ENCODE measurements at regions of chr17 and their contacts with region 1.

Region 1: DNA sequence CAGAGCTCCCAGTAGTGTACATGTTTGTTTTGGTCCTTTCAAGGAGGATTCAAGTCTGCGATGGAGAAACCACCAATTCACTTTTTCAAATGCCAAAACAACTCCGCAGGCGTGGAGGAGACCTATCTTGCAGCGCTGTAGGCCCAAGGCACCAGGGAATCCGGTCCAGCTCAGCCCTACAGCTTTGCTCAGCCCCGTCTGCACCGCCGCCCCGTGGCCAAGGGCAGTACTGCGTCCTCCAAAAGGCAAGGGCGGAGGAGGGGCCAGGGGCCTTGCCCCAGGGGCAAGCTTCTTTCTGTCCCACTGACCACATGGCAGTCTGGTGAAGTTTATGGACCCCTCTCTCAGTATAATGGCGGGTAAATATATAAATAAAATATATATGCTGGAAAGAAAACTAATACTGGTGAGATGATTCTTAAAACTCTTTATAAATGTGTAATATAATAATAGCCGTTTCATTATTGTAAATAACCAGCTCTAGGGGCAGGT is 709 bp upstream of the CD300LG start:
- DNase-seq: peak; percentile 70
- ATAC-seq: peak; percentile 93
- H3K4me3 ChIP-seq: no peak overlapping the region
- H3K27ac ChIP-seq: no peak overlapping the region
- H3K4me1 ChIP-seq: peaks cover 18 to 25% of the 10 kb centered on the region in 2 experiments
- H3K27me3 ChIP-seq: no peaks in the 10 kb centered on the region
- CTCF ChIP-seq: peak; percentile 90 to 100 (median 96)
- POLR2A ChIP-seq: no peak
- RAD21 ChIP-seq: peak; percentile 91

Region 2: GRCh38 chr17:43694077-43694870 is 152.0 kb before region 1 on chr17:
- CTCF ChIA-PET with region 1: interaction called, 6 read pairs
- POLR2A ChIA-PET with region 1: no interaction called
- RAD21 ChIA-PET with region 1: interaction called in 1 of 2 experiments, 5 read pairs
- intact Hi-C with region 1: loop called (anchors 10 kb)
- DNase-seq: peak; percentile 78
- ATAC-seq: peak; percentile 94
- H3K4me3 ChIP-seq: no peak overlapping the region
- H3K27ac ChIP-seq: no peak overlapping the region
- H3K4me1 ChIP-seq: peaks cover 3 to 9% of the 10 kb centered on the region in 2 experiments; a peak in 3 of 4 replicates
- H3K27me3 ChIP-seq: no peaks in the 10 kb centered on the region
- CTCF ChIP-seq: peak; percentile 81 to 99 (median 92)
- POLR2A ChIP-seq: no peak
- RAD21 ChIP-seq: peak; percentile 98

Region 3: GRCh38 chr17:43766413-43767052 is 79.7 kb before region 1 on chr17:
- CTCF ChIA-PET with region 1: interaction called, 13 read pairs
- POLR2A ChIA-PET with region 1: no interaction called
- RAD21 ChIA-PET with region 1: interaction called in 1 of 2 experiments, 3 read pairs
- intact Hi-C with region 1: no loop called
- DNase-seq: peak; percentile 39
- ATAC-seq: peak; percentile 79
- H3K4me3 ChIP-seq: no peak overlapping the region
- H3K27ac ChIP-seq: no peak overlapping the region
- H3K4me1 ChIP-seq: no peaks in the 10 kb centered on the region
- H3K27me3 ChIP-seq: no peaks in the 10 kb centered on the region
- CTCF ChIP-seq: peak; percentile 56 to 97 (median 90); a peak in 5 of 6 replicates
- POLR2A ChIP-seq: no peak
- RAD21 ChIP-seq: peak; percentile 50; the same call in 1 of the 2 replicates

Region 4: DNA sequence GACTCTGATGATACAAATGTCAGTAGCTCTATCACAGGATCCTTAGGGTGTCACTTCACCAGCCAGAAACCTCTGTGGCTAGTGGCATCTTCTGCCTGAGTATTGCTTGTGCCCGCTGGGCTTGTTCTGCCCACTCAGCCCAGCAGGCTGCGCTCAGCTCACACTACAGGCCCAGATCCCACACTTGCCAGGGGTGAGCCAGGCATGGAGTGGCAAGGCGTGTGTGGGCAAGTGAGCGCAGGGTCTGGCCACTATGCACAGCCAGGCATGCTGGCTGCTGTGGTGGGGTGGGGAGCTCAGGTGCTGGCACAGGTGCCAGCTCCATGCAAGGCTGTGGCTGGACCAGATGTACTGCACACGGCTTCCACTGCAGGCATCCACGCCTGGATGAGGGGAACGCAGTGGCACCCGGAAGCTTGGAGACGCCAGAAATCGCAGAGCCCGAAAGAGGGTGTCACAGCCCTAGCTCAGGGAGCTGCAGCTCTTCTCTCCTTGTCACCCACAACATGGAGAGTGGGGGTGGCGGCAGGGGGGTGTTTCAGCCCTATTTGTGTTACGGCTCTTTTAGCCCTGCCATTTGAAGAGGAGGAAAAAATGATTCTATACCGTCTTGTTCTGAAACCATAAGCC is 55.8 kb before region 1 on chr17:
- CTCF ChIA-PET with region 1: interaction called, 13 read pairs
- POLR2A ChIA-PET with region 1: no interaction called
- RAD21 ChIA-PET with region 1: no interaction called
- intact Hi-C with region 1: loop called (anchors 1 kb)
- DNase-seq: no peak
- ATAC-seq: peak; percentile 64; the same call in 1 of the 2 replicates
- H3K4me3 ChIP-seq: no peak overlapping the region
- H3K27ac ChIP-seq: no peak overlapping the region
- H3K4me1 ChIP-seq: peaks cover 10 to 12% of the 10 kb centered on the region in 2 experiments
- H3K27me3 ChIP-seq: no peaks in the 10 kb centered on the region
- CTCF ChIP-seq: peak in 2 of 3 experiments; percentile 33 to 45; a peak in 2 of 6 replicates
- POLR2A ChIP-seq: no peak
- RAD21 ChIP-seq: peak; percentile 65

Region 5: DNA sequence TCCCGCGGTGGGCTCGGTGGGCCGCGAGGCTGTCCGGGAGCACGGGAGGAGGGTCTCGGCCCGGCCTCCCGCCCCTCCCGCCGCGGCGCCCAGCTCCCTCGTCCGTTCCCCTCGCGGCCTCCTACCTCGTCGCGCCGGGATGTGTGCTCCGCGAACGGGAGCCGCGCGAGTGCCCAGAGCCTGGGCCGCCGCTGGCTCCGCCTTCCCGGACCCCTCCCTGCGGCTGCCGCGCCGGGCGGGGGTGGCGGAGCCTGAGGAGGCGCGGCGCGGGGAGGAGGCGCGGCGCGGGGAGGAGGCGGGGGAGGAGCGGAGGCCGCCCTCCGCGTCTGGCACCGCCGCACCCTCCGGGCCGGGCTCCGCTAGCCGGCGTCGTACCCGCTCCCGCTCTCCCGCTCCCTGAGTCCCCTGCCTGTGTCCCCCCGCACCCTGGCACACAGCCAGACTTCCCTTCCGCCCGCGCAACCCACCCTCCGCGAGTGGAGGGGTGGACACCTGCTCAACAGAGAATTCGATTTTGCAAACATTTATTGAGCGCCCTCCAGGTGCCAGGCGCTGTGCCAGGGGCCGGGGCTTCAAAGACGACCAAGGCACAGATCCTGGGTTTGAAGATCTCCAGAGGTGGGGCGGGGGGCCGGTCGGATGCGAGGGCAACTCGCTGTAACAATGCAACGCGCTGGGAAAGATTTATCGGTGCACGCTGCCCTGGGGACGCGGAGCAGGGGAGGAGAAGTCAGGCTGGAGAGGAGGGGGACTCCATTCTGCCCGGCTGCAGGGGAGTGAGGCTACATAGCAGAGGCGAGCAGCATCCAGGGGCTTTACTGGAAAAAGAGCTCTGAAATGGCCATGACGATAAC is 13.1 kb before region 1 on chr17 and contains the start of gene MPP3:
- CTCF ChIA-PET with region 1: interaction called, 5 read pairs
- POLR2A ChIA-PET with region 1: no interaction called
- RAD21 ChIA-PET with region 1: no interaction called
- intact Hi-C with region 1: loop called (anchors 1 kb)
- DNase-seq: no peak
- ATAC-seq: peak; percentile 91
- H3K4me3 ChIP-seq: peak within 1 kb of the TSS; percentile 56 to 88
- H3K27ac ChIP-seq: peak within 1 kb of the TSS; percentile 54
- H3K4me1 ChIP-seq: peaks cover 16 to 24% of the 10 kb centered on the region in 2 experiments
- H3K27me3 ChIP-seq: no peaks in the 10 kb centered on the region
- CTCF ChIP-seq: no peak
- POLR2A ChIP-seq: no peak
- RAD21 ChIP-seq: no peak
- total RNA-seq, gene MPP3: 19.5 TPM

Region 6: DNA sequence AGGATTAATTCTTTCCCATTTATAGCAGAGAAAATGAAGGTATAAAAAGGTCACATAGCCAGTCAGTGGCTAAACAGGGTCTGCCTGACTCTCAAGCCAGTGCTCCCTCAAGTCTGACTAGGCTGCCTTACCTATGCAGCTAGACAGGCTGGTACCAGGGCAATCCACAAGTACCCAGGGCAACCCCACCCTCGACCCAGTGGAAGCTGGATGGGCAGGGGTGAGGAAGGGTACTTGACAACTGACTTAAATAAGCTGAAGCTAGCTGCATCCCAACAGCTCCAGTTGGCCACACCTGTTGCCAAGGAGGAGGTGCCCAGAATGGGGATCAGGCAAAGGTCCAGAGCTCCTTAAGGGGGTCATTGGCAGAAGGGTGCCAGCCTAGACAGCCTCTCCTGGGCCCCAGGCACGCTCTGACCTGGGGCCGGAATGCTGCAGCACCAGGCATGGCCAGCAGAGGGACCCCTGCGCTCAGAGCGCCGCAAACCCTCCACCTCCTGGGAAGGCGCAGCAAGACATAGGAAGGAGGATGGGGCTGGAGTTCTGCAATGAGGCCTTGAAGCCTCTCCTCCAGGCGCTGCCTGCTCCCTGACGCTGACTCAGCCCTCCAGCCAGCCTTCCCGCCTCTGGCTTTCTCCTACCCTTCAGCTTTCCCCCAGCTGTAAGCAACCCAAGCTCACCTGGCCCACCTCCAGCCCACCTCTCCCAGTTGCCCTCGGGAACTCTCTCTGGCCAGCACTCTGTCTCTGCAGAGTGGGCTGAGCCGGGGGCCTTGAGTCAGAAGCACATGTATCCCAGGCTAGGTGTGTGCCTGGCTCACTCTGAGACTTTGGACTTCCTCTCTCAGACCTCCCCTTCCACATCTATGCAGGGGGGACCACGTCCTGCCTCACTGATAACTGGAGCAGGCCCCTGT is 32.3 kb after region 1 on chr17:
- CTCF ChIA-PET with region 1: interaction called, 10 read pairs
- POLR2A ChIA-PET with region 1: no interaction called
- RAD21 ChIA-PET with region 1: no interaction called
- intact Hi-C with region 1: no loop called
- DNase-seq: peak; percentile 37
- ATAC-seq: peak; percentile 95
- H3K4me3 ChIP-seq: no peak overlapping the region
- H3K27ac ChIP-seq: no peak overlapping the region
- H3K4me1 ChIP-seq: peaks cover 0 to 9% of the 10 kb centered on the region in 2 experiments; a peak in 2 of 4 replicates
- H3K27me3 ChIP-seq: no peaks in the 10 kb centered on the region
- CTCF ChIP-seq: peak; percentile 91 to 95 (median 95)
- POLR2A ChIP-seq: no peak
- RAD21 ChIP-seq: peak; percentile 87

Measured in HCT116 (cell line).